Endothelial cell of umbilical vein (primary cell): ENCODE measurements at regions of chr14 and their contacts with region 1.

Region 1: GRCh38 chr14:67396501-67396900 is 15.5 kb downstream of the PLEK2 start:
- DNase-seq: no peak
- H3K4me3 ChIP-seq: no peak overlapping the region
- H3K27ac ChIP-seq: peak overlapping the region; percentile 2
- H3K4me1 ChIP-seq: peaks cover 16% of the 10 kb centered on the region
- H3K27me3 ChIP-seq: no peaks in the 10 kb centered on the region
- CTCF ChIP-seq: no peak
- POLR2A ChIP-seq: no peak

Region 2: GRCh38 chr14:67343601-67344230 is 52.8 kb before region 1 on chr14:
- CTCF ChIA-PET with region 1: no interaction called
- POLR2A ChIA-PET with region 1: no interaction called
- dilution Hi-C with region 1: no loop called
- intact Hi-C with region 1: no loop called
- DNase-seq: peak; percentile 35
- H3K4me3 ChIP-seq: no peak overlapping the region
- H3K27ac ChIP-seq: no peak overlapping the region
- H3K4me1 ChIP-seq: peaks cover 3% of the 10 kb centered on the region
- H3K27me3 ChIP-seq: no peaks in the 10 kb centered on the region
- CTCF ChIP-seq: no peak
- POLR2A ChIP-seq: no peak

Region 3: GRCh38 chr14:67411820-67412421 is 15.4 kb after region 1 on chr14 and contains the start of gene PLEK2:
- CTCF ChIA-PET with region 1: interaction called, 9 read pairs
- POLR2A ChIA-PET with region 1: no interaction called
- dilution Hi-C with region 1: no loop called
- intact Hi-C with region 1: loop called (anchors 1 kb)
- DNase-seq: no peak
- H3K4me3 ChIP-seq: peak within 1 kb of the TSS in 1 of 3 experiments; percentile 28
- H3K27ac ChIP-seq: no peak within 1 kb of the TSS
- H3K4me1 ChIP-seq: peaks cover 19% of the 10 kb centered on the region
- H3K27me3 ChIP-seq: no peaks in the 10 kb centered on the region
- CTCF ChIP-seq: no peak
- POLR2A ChIP-seq: no peak
- total RNA-seq, gene PLEK2: 3.8 and 4.7 TPM in 2 replicates